Activated naive CD4-positive, alpha-beta T cell treated with anti-CD3 and anti-CD28 coated beads for 36 hours (primary cell): ENCODE measurements at regions of chr19 and their contacts with region 1.

Region 1: DNA sequence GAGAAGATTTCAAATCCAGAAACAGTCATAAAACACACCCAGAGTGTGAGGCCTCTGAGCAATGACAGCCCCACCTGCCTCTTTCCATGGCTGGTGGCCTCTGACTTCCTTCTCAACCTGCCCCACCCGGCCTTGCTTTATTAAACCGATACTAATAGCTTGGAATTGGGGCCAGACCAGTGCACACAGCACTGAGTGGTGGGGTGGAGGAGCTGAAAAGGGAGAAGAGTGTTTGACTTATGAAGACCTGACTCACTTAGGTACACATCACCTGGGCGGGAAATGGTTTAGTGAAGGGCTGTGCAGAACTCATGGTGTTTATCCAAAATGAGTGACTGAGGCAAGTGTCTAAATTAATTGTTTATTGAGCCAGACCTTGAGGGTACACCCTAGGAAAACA is 20.7 kb upstream of the CEACAM6 start:
- DNase-seq: no peak
- H3K4me3 Mint-ChIP-seq: no peak overlapping the region
- H3K27ac Mint-ChIP-seq: no peak overlapping the region
- H3K4me1 Mint-ChIP-seq: peaks cover 6% of the 10 kb centered on the region
- H3K27me3 Mint-ChIP-seq: peaks cover 27% of the 10 kb centered on the region

Region 2: DNA sequence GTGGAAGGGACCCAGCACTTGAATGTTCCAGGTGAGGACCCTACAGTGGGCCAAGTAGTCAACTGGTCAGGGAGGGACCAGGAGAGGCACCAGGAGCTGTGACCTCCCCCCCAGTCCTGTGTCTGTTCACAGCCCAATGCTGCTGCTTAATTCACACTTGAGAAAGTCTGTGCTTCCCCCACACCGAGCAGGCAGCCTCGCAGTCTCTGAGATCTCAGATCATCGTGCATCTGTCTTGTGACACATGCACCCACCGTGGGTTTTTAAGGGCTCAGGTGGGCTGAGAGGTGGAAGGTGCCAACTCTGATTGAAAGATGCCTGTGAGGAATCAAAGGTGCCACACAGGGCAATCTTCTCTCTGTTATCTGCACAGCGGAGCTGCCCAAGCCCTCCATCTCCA is 20.0 kb before region 1 on chr19:
- CTCF ChIA-PET with region 1: no interaction called
- intact Hi-C with region 1: loop called (anchors 1 kb)
- DNase-seq: no peak
- H3K4me3 Mint-ChIP-seq: no peak overlapping the region
- H3K27ac Mint-ChIP-seq: no peak overlapping the region
- H3K4me1 Mint-ChIP-seq: no peaks in the 10 kb centered on the region
- H3K27me3 Mint-ChIP-seq: peaks cover 15% of the 10 kb centered on the region